Activated CD4-positive, alpha-beta T cell treated with anti-CD3 and anti-CD28 coated beads for 36 hours (primary cell): ENCODE measurements at regions of chr7 and their contacts with region 1.

Region 1: GRCh38 chr7:50449881-50450589 is at the start of gene FIGNL1:
- DNase-seq: peak; percentile 92
- ATAC-seq: peak; percentile 87
- H3K4me3 Mint-ChIP-seq: peak within 1 kb of the TSS; percentile 70
- H3K27ac Mint-ChIP-seq: peak within 1 kb of the TSS; percentile 93
- H3K4me1 Mint-ChIP-seq: peaks cover 46% of the 10 kb centered on the region
- H3K27me3 Mint-ChIP-seq: no peaks in the 10 kb centered on the region
- total RNA-seq, gene FIGNL1: 46.9 to 49.3 TPM

Region 2: GRCh38 chr7:50197549-50197948 is 252.5 kb before region 1 on chr7:
- CTCF ChIA-PET with region 1: interaction called, 4 read pairs
- POLR2A ChIA-PET with region 1: no interaction called
- intact Hi-C with region 1: loop called in 1 of 2 experiments (anchors 1 kb)
- DNase-seq: peak; percentile 91
- ATAC-seq: peak; percentile 96
- H3K4me3 Mint-ChIP-seq: peak overlapping the region; percentile 9
- H3K27ac Mint-ChIP-seq: peak overlapping the region; percentile 76
- H3K4me1 Mint-ChIP-seq: peaks cover 43% of the 10 kb centered on the region
- H3K27me3 Mint-ChIP-seq: no peaks in the 10 kb centered on the region

Region 3: DNA sequence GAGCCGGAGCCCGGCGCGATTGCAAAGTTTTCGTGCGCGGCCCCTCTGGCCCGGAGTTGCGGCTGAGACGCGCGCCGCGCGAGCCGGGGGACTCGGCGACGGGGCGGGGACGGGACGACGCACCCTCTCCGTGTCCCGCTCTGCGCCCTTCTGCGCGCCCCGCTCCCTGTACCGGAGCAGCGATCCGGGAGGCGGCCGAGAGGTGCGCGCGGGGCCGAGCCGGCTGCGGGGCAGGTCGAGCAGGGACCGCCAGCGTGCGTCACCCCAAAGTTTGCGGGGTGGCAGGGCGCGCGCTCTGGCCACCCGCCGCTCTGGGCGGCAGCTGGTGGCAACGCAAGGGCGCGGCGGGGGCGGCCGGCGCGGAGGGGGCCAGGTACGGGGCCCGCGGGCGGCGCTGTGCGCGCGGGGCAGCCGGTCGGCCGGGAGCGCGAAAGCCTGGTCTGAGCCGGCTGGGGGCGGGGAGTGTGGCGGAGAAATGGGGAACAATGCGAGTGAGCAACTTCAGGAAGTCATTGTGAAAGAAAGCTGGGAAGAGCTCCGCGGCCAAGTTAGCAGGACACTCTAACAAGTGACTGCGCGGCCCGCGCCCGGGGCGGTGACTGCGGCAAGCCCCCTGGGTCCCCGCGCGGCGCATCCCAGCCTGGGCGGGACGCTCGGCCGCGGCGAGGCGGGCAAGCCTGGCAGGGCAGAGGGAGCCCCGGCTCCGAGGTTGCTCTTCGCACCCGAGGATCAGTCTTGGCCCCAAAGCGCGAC is 145.7 kb before region 1 on chr7 and contains the start of gene IKZF1:
- CTCF ChIA-PET with region 1: no interaction called
- POLR2A ChIA-PET with region 1: no interaction called
- intact Hi-C with region 1: loop called in 1 of 2 experiments (anchors 5 kb)
- DNase-seq: peak; percentile 82
- ATAC-seq: peak; percentile 21
- H3K4me3 Mint-ChIP-seq: peak within 1 kb of the TSS; percentile 95
- H3K27ac Mint-ChIP-seq: peak within 1 kb of the TSS; percentile 100
- H3K4me1 Mint-ChIP-seq: peaks cover 40% of the 10 kb centered on the region
- H3K27me3 Mint-ChIP-seq: no peaks in the 10 kb centered on the region
- total RNA-seq, gene IKZF1: 245 to 260 TPM

Region 4: DNA sequence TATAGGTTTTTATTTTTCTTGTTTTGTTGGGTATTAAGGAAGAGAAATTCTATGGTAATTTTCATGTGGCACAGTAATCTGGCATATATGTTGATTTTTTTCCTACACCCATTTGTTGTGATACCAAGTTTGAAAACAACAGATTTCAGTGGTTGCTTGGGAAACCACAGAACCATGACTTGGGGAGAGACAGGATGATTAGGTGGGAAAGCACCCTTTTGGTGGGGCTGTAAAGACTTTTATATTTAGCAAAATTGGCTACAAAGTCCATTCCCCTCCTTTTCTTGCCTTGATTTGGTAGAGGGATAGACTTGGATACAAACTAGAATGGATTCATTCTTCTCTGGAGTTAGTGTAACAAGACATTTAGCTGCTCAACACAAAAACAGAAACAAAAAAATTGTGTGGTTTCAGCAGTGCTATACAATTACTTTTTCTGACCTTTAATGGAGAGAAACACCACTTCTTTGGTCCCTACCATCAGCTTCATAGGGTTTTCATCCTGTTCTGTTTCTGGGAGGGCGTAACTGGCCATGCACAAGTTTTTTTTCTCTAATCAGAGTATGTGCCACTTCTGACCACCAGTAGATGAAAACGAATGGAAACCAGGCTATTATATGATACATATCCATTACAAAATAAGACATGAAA is 52.6 kb before region 1 on chr7:
- CTCF ChIA-PET with region 1: no interaction called
- POLR2A ChIA-PET with region 1: interaction called, 3 read pairs
- intact Hi-C with region 1: loop called (anchors 1 kb)
- DNase-seq: peak; percentile 63
- ATAC-seq: peak; percentile 12
- H3K4me3 Mint-ChIP-seq: peak overlapping the region; percentile 26
- H3K27ac Mint-ChIP-seq: peak overlapping the region; percentile 82
- H3K4me1 Mint-ChIP-seq: peaks cover 80% of the 10 kb centered on the region
- H3K27me3 Mint-ChIP-seq: no peaks in the 10 kb centered on the region

Region 5: GRCh38 chr7:50534690-50535290 is 84.8 kb after region 1 on chr7:
- CTCF ChIA-PET with region 1: no interaction called
- POLR2A ChIA-PET with region 1: no interaction called
- intact Hi-C with region 1: loop called in 1 of 2 experiments (anchors 2 kb)
- DNase-seq: peak; percentile 35
- ATAC-seq: peak; percentile 70
- H3K4me3 Mint-ChIP-seq: no peak overlapping the region
- H3K27ac Mint-ChIP-seq: no peak overlapping the region
- H3K4me1 Mint-ChIP-seq: peaks cover 27% of the 10 kb centered on the region
- H3K27me3 Mint-ChIP-seq: peaks cover 12% of the 10 kb centered on the region

Region 6: DNA sequence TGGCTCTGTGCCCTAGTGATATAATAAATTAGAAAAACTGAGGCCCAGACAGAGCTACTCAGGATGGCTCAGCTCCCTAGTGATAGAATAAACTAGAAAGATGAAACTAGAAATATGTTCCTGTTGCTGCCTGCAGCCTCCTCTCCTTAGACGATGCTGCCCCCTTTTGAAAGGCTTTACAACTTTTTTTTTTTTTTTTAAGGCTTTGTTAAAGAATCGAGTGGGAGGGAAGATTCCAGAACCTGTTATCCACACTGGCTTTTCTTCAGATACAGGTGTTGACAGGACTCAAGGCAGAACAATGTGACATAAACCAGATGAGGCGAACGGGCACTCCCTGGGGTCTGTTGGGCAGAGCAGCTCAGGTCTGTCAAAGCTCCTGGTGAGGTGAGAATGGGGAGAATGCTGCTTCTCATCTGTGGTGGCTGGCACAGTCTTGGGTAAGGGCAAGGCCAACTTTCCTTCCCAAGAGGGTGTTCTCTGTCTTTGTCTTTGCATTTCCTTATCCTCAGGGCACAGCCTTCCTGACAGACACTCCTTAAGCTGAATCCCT is 691.5 kb after region 1 on chr7:
- CTCF ChIA-PET with region 1: no interaction called
- POLR2A ChIA-PET with region 1: interaction called, 6 read pairs
- intact Hi-C with region 1: loop called in 1 of 2 experiments (anchors 5 kb)
- DNase-seq: peak; percentile 40
- ATAC-seq: peak; percentile 77
- H3K4me3 Mint-ChIP-seq: no peak overlapping the region
- H3K27ac Mint-ChIP-seq: no peak overlapping the region
- H3K4me1 Mint-ChIP-seq: peaks cover 23% of the 10 kb centered on the region
- H3K27me3 Mint-ChIP-seq: peaks cover 3% of the 10 kb centered on the region